ENCODE measurements at regions of chr19 and their contacts with region 1.

Region 1: GRCh38 chr19:58002384-58003173 is at the start of gene ZNF606:
- DNase-seq: peak; percentile 62 to 95 (median 89)

Region 2: DNA sequence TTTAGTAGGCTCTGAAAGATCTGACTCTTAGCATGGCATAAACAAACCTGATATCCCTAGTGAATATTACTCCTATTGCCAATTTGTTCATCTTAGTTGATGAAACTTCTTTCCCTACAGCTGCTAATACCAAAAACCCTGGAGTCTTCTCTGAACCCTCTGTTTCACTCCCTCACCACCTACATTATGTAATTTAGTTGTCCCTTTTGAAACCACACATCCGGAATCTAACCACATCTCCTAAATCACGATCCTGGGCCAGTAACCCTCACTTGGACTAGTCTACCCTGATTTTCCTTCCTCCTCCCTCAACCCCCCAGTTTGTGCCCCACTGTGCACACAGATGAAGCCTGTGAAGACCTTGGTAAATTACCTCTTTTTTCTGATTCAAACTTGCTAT is 56.3 kb before region 1 on chr19:
- intact Hi-C with region 1: no loop called
- DNase-seq: no peak

Region 3: GRCh38 chr19:58059003-58059670 is 56.6 kb after region 1 on chr19 and contains the start of gene ZNF135:
- intact Hi-C with region 1: loop called (anchors 5 kb)
- DNase-seq: peak; percentile 75 to 94 (median 87)

Measured in head of caudate nucleus (tissue), 42 donors.